ENCODE measurements at regions of chr20 and their contacts with region 1.

Region 1: DNA sequence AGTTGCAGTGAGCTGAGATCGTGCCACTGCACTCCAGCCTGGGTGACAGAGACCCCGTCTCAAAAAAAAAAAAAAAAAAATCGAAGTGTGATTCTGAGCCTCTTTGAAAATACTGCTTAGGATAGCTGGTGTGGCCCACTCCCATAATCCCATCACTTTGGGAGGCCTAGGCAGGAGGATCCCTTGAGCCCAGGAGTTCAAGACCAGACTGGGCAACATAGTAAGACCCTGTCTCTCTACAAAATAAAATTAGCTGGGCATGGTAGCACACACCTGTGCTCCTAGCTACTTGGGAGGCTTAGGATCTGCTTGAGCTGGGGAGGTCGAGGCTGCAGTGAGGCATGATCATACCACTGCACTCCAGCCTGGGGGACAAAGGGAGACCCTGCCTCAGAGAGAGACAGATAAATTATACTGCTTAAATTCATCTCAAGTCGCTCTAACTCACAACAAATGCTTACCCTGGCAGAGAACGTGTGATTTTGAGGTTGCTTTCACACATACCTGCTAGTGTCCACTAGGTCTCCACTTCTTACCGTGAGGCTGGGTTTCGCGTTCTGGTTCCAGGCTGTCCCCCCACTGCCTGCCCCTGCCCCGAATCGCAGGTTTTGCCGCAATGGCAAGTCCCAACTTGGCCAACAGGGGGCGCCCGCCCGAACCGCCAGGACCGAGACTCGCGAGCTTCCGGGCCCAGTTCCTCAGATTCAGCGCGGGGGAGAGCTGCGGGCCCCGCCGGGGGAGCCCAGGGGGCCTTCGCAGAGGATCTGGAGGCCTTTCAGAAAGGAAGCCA is 12.3 kb upstream of the TMC2 start:
- DNase-seq: peak; percentile 91
- H3K4me3 Mint-ChIP-seq: peak overlapping the region; percentile 81
- H3K27ac Mint-ChIP-seq: peak overlapping the region; percentile 83
- H3K4me1 Mint-ChIP-seq: peaks cover 26% of the 10 kb centered on the region
- H3K27me3 Mint-ChIP-seq: peaks cover 4% of the 10 kb centered on the region

Region 2: DNA sequence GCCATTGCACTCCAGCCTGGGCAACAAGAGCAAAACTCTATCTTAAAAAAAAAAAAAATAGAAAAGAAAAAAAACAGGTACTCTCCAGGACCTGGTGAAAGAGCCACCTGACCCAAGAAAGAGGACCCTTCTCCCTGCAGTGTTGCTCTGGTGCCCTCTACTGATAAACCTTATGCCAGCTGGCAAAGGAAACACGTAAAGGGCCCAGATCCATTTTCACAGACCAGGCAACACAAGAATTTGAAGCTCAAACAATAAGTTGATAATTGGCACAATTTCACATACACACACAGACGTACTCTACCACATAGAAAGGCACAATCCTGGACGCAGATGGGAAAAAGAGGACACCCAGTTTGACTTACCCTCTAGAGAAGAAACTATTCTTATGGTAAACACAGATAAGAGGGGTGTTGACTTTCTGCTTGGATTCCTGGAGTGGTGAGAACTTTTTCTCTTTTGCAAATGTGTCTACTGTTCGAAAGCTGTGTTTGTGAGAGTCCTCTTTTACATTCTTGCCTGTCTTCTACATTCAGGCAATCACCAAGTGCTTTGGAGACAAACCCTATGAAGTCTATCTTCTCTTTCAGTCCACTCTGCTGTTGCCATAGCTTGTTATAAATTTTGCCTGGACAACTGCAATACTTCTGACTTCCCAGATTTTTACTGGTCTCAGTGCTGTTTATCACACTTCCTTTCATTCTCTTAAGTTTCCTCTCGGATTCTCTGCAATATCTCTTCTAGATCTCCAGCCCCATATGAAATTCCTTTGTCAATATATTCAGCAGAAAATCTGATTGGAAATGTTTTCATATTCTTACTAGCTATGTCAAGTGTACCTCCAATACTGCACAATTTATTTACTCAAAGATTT is 47.1 kb before region 1 on chr20:
- CTCF ChIA-PET with region 1: interaction called, 10 read pairs
- POLR2A ChIA-PET with region 1: no interaction called
- DNase-seq: no peak
- H3K4me3 Mint-ChIP-seq: no peak overlapping the region
- H3K27ac Mint-ChIP-seq: no peak overlapping the region
- H3K4me1 Mint-ChIP-seq: peaks cover 5% of the 10 kb centered on the region
- H3K27me3 Mint-ChIP-seq: no peaks in the 10 kb centered on the region

Region 3: GRCh38 chr20:2508631-2509467 is 15.3 kb before region 1 on chr20 and contains the start of gene ZNF343:
- CTCF ChIA-PET with region 1: interaction called, 35 read pairs
- POLR2A ChIA-PET with region 1: no interaction called
- DNase-seq: peak; percentile 86
- H3K4me3 Mint-ChIP-seq: peak within 1 kb of the TSS; percentile 99
- H3K27ac Mint-ChIP-seq: peak within 1 kb of the TSS; percentile 99
- H3K4me1 Mint-ChIP-seq: peaks cover 21% of the 10 kb centered on the region
- H3K27me3 Mint-ChIP-seq: peaks cover 25% of the 10 kb centered on the region
- total RNA-seq, gene ZNF343: 8.9 to 9.3 TPM

Region 4: DNA sequence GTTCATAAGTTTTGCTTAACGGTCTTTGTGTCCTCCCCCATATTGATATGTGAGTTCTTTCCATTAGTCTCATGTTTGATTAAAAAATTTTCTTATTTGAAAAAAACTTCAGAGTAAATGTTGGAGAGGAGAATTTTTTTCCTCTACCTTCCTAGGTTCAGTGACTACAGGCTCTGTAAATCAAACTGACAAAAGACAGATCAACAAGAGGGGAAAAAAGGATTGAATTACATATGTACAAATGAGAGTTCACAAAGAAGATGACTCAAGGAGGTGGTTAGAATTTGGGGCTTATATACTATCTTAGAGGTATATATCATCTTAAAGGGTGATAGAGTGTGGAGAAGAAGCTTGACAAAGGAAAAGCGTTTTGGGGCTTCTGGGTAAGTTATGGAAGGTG is 17.8 kb after region 1 on chr20:
- CTCF ChIA-PET with region 1: interaction called, 5 read pairs
- POLR2A ChIA-PET with region 1: interaction called, 10 read pairs
- DNase-seq: no peak
- H3K4me3 Mint-ChIP-seq: no peak overlapping the region
- H3K27ac Mint-ChIP-seq: no peak overlapping the region
- H3K4me1 Mint-ChIP-seq: no peaks in the 10 kb centered on the region
- H3K27me3 Mint-ChIP-seq: peaks cover 46% of the 10 kb centered on the region

Region 5: GRCh38 chr20:2576317-2576727 is 52.2 kb after region 1 on chr20:
- CTCF ChIA-PET with region 1: no interaction called
- POLR2A ChIA-PET with region 1: no interaction called
- DNase-seq: no peak
- H3K4me3 Mint-ChIP-seq: no peak overlapping the region
- H3K27ac Mint-ChIP-seq: no peak overlapping the region
- H3K4me1 Mint-ChIP-seq: no peaks in the 10 kb centered on the region
- H3K27me3 Mint-ChIP-seq: peaks cover 36% of the 10 kb centered on the region

Measured in activated CD4-positive, alpha-beta T cell treated with anti-CD3 and anti-CD28 coated beads, Interleukin-2, amount 10 ng/mL, durations not matched to agents 7 days and 5 days (primary cell).